ENCODE measurements at regions of chr1 and their contacts with region 1.

Region 1: GRCh38 chr1:207672522-207673130 is 27.7 kb downstream of the CR1L start:
- DNase-seq: no peak
- ATAC-seq: no peak
- H3K4me3 ChIP-seq: no peak overlapping the region
- H3K27ac ChIP-seq: no peak overlapping the region
- H3K4me1 ChIP-seq: peaks cover 0 to 8% (median 0%) of the 10 kb centered on the region in 12 donors
- H3K27me3 ChIP-seq: peaks cover 0 to 54% (median 26%) of the 10 kb centered on the region in 9 donors
- CTCF ChIP-seq: peak in 2 of 12 donors; percentile 19 to 32
- POLR2A ChIP-seq: no peak

Region 2: DNA sequence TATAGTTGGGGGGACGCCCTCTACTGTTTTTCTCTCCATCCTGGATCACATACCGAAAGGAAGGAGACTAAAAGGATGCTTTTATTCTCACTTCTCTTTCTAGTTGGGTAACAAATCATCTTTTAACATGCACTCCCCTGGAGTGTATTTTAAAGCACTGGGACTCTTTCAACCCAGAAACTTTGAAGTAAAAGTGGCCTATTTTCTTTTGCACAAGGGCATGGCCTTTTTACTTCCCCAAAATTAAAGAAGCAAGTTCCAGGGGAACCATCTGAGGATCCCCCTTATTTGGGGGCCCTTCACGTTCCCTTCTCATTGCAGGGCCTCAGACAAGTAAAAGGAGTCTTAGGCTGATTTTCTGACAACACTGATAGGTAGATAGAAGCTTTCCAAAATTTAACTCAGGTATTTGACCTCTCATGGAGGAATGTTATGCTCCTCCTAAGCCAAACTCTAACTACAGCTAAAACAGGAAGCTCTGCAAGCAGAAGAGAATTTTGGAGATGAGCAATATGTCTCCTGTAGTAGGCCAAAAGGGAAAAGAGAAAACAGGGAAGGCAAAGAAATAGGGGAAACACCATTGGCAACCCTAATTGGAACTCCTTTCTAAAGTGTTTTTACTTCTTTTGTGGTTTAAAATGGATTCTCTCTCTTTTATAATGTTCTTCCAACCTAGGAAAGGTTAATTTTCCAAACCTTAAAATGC is 70.4 kb after region 1 on chr1:
- intact Hi-C with region 1: loop called in 1 of 10 experiments (anchors 10 kb)
- DNase-seq: no peak
- ATAC-seq: no peak
- H3K4me3 ChIP-seq: no peak overlapping the region
- H3K27ac ChIP-seq: peak overlapping the region in 1 of 12 donors; percentile 49
- H3K4me1 ChIP-seq: peaks cover 0 to 7% (median 0%) of the 10 kb centered on the region in 12 donors
- H3K27me3 ChIP-seq: no peaks in the 10 kb centered on the region
- CTCF ChIP-seq: no peak
- POLR2A ChIP-seq: no peak

Region 3: GRCh38 chr1:207811920-207812720 is 139.5 kb after region 1 on chr1:
- intact Hi-C with region 1: no loop called
- DNase-seq: peak; percentile 66 to 86 (median 77)
- ATAC-seq: peak; percentile 14 to 63 (median 40)
- H3K4me3 ChIP-seq: peak overlapping the region in 5 of 12 donors; percentile 5 to 35 (median 21)
- H3K27ac ChIP-seq: peak overlapping the region; percentile 56 to 98 (median 81)
- H3K4me1 ChIP-seq: peaks cover 28 to 100% (median 97%) of the 10 kb centered on the region in 12 donors
- H3K27me3 ChIP-seq: no peaks in the 10 kb centered on the region
- CTCF ChIP-seq: peak; percentile 30 to 70 (median 48)
- POLR2A ChIP-seq: no peak